Sigmoid colon (tissue), 7 donors: ENCODE measurements at regions of chr9 and their contacts with region 1.

Region 1: GRCh38 chr9:20526500-20527319 is 95.6 kb downstream of the MLLT3 start:
- DNase-seq: no peak
- H3K4me3 ChIP-seq: no peak overlapping the region
- H3K27ac ChIP-seq: no peak overlapping the region
- H3K4me1 ChIP-seq: peaks cover 0 to 19% (median 11%) of the 10 kb centered on the region in 4 donors
- H3K27me3 ChIP-seq: no peaks in the 10 kb centered on the region
- CTCF ChIP-seq: peak in 1 of 4 experiments; percentile 17
- EP300 ChIP-seq: no peak
- POLR2A ChIP-seq: no peak

Region 2: GRCh38 chr9:20558566-20559016 is 31.9 kb after region 1 on chr9:
- intact Hi-C with region 1: loop called (anchors 5 kb)
- DNase-seq: no peak
- H3K4me3 ChIP-seq: no peak overlapping the region
- H3K27ac ChIP-seq: peak overlapping the region; percentile 7 to 70 (median 60)
- H3K4me1 ChIP-seq: peaks cover 2 to 79% (median 68%) of the 10 kb centered on the region in 4 donors
- H3K27me3 ChIP-seq: no peaks in the 10 kb centered on the region
- CTCF ChIP-seq: no peak
- EP300 ChIP-seq: no peak
- POLR2A ChIP-seq: no peak

Region 3: GRCh38 chr9:20604562-20604961 is 77.9 kb after region 1 on chr9:
- intact Hi-C with region 1: no loop called
- DNase-seq: no peak
- H3K4me3 ChIP-seq: peak overlapping the region in 3 of 4 donors; percentile 17 to 30 (median 29)
- H3K27ac ChIP-seq: peak overlapping the region; percentile 52 to 76 (median 61)
- H3K4me1 ChIP-seq: peaks cover 0 to 82% (median 55%) of the 10 kb centered on the region in 4 donors
- H3K27me3 ChIP-seq: no peaks in the 10 kb centered on the region
- CTCF ChIP-seq: no peak
- EP300 ChIP-seq: no peak
- POLR2A ChIP-seq: no peak